Activated B cell treated with CpG ODN at 0.5 μM for 24 hours (primary cell): ENCODE measurements at regions of chr12 and their contacts with region 1.

Region 1: DNA sequence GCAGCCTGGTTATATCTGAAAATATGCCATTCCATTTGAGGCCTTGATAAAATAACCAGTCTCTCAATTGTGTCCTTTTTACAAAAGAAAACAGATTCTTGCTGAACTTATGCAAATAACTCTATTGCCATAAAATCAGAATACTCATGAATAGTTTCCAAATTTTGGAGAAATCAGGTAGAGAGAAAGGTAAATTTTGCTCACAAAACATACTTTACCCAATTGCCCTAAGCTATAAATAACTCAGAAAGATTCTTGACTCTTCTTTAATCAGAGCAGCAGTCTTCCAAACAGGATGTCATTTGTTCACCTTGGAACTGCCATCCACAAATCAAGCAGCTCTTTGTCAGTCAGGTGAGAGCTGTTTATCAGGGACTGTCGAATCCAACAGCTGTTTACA is 12.6 kb downstream of the ZNF26 start:
- DNase-seq: no peak
- ATAC-seq: no peak
- H3K4me3 Mint-ChIP-seq: no peak overlapping the region
- H3K27ac Mint-ChIP-seq: no peak overlapping the region
- H3K4me1 Mint-ChIP-seq: no peaks in the 10 kb centered on the region
- H3K27me3 Mint-ChIP-seq: no peaks in the 10 kb centered on the region
- CTCF ChIP-seq: no peak

Region 2: GRCh38 chr12:133058203-133059125 is 59.7 kb after region 1 on chr12:
- CTCF ChIA-PET with region 1: no interaction called
- POLR2A ChIA-PET with region 1: no interaction called
- intact Hi-C with region 1: no loop called
- DNase-seq: no peak
- ATAC-seq: no peak
- H3K4me3 Mint-ChIP-seq: no peak overlapping the region
- H3K27ac Mint-ChIP-seq: no peak overlapping the region
- H3K4me1 Mint-ChIP-seq: no peaks in the 10 kb centered on the region
- H3K27me3 Mint-ChIP-seq: no peaks in the 10 kb centered on the region
- CTCF ChIP-seq: no peak

Region 3: DNA sequence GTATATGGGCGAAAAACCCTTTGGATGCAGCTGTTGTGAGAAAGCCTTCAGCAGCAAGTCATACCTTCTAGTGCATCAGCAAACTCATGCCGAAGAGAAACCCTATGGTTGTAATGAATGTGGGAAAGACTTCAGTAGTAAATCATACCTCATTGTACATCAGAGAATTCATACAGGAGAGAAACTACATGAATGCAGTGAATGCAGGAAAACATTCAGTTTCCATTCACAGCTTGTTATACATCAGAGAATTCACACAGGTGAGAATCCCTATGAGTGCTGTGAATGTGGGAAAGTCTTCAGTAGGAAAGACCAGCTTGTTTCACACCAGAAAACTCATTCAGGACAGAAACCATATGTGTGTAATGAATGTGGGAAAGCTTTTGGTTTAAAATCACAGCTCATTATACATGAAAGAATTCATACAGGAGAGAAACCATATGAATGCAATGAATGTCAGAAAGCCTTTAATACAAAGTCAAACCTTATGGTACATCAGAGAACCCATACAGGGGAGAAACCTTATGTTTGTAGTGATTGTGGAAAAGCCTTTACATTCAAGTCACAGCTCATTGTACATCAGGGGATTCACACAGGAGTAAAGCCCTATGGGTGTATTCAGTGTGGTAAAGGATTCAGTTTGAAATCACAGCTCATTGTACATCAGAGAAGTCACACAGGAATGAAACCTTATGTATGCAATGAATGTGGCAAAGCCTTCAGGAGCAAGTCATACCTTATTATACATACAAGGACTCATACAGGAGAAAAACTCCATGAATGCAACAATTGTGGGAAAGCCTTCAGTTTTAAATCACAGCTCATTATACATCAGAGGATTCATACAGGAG is 204.0 kb after region 1 on chr12:
- CTCF ChIA-PET with region 1: no interaction called
- POLR2A ChIA-PET with region 1: interaction called, 11 read pairs
- intact Hi-C with region 1: no loop called
- DNase-seq: no peak
- ATAC-seq: no peak
- H3K4me3 Mint-ChIP-seq: no peak overlapping the region
- H3K27ac Mint-ChIP-seq: no peak overlapping the region
- H3K4me1 Mint-ChIP-seq: no peaks in the 10 kb centered on the region
- H3K27me3 Mint-ChIP-seq: no peaks in the 10 kb centered on the region
- CTCF ChIP-seq: no peak